ENCODE measurements at regions of chr12 and their contacts with region 1.

Region 1: DNA sequence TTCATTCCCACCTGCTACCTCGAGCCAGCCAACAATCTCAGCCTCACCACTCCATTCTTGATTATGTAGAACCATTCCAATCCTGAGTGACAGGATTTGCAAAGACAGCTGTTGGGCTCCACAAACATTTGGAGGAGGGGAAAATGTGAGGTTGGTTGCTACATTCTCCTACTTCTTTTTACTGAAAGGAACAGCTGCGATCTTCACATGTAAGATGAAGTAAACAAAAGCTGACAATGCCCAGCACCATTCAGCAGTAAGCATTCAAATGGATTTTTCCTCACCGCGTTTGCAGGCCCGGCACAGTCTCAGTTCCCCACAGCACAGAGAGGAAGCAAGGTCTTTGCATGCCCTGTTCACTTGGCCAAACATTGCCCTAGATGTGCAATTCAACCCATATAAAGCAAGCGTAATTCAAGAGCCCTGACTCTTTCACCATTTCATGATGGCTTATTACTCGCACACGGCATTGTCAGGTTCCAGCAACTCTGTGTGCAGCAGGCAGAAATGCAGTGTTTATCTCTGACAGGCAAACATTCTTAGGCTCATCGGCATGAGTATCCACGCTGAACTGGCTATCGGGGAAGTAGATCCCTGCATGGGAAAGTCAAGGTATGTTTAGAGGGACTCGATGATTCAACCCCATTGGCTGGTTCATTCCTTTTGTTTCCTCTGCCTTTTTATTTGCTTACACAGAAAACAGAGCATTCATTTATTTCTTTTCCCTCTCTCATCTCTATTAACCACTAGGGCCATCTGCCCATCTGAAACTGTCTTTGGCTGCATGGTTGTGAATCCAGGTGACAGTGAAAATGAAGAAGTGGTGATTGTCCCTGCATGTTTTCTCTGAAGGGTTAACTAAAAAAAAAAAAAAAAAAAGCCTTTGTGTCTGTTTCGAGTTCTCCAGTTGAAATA is 236.1 kb upstream of the PLEKHG7 start:
- DNase-seq: peak; percentile 92
- H3K4me3 ChIP-seq: peak overlapping the region; percentile 70
- H3K27ac ChIP-seq: peak overlapping the region; percentile 98
- H3K4me1 ChIP-seq: peaks cover 83% of the 10 kb centered on the region
- CTCF ChIP-seq: no peak; the same call in 1 of the 2 replicates

Region 2: DNA sequence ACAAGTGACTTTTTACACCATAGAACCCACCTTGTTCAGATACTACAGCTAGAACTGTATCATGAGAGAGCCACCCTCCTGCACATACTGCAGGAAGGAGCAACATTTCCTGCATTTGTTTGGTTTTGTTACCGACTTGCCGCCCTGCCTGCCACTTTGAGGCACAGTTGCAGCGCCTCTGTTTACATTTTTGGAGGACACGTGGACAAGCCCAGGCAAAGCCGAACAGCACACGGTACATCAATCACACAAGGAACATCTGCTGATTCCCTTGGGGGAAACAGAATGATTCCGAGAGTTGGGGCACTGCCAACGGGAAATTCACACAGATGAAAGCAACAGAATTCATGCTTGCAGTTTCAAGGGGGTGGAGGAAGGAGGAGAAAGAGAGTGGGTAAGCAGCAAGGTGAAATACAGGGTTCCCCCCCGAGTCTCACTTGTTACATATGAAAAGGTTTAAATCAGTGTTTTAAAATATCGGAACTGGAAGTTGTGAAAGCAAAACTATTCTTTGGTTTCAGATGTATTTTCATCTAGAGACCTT is 431.7 kb before region 1 on chr12:
- CTCF ChIA-PET with region 1: no interaction called
- POLR2A ChIA-PET with region 1: no interaction called
- intact Hi-C with region 1: loop called (anchors 5 kb)
- DNase-seq: peak; percentile 88
- H3K4me3 ChIP-seq: peak overlapping the region; percentile 64
- H3K27ac ChIP-seq: peak overlapping the region; percentile 64
- H3K4me1 ChIP-seq: peaks cover 70% of the 10 kb centered on the region
- CTCF ChIP-seq: no peak

Region 3: DNA sequence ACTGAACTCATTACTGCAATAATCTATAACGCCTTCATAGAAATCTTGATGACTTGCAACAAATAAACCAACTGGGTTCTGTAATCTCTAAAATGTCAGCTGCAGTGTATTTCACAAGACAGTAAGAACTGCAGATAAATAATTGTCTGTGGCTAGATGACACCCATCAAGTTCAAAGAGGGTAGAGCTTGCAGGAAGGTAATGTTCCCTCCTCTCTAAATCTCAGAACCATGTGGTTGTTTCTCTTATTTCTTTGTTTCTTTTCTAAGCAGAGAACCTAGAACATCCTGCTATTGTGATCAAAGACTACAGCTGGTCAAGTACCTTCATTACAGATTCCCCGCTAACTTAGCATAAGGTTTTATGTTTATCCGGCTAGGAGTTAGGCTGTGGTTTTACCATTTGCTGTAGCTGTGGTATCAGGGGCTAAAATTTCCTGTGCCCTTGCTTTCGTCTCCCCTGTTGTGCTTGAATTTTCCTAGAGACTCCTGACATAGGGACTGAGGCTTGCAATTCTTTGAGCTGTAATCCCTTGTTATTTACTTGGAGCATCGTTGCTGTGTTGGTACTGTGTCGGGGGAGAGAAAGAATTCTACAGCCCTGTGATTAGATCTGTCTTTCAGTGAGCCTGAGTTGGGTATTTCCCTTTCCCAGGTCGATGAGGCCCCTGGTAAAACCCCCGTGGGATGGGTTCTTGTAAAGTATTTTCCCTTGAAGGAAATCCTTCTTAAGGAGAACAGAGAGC is 67.9 kb before region 1 on chr12:
- CTCF ChIA-PET with region 1: no interaction called
- POLR2A ChIA-PET with region 1: interaction called, 19 read pairs
- intact Hi-C with region 1: loop called (anchors 2 kb)
- DNase-seq: peak; percentile 13
- H3K4me3 ChIP-seq: no peak overlapping the region
- H3K27ac ChIP-seq: no peak overlapping the region
- H3K4me1 ChIP-seq: peaks cover 55% of the 10 kb centered on the region
- CTCF ChIP-seq: no peak

Region 4: GRCh38 chr12:92445253-92446082 is 21.2 kb before region 1 on chr12:
- CTCF ChIA-PET with region 1: interaction called, 10 read pairs
- POLR2A ChIA-PET with region 1: interaction called, 238 read pairs
- intact Hi-C with region 1: loop called (anchors 1 kb)
- DNase-seq: peak; percentile 98
- H3K4me3 ChIP-seq: peak overlapping the region; percentile 58
- H3K27ac ChIP-seq: peak overlapping the region; percentile 99
- H3K4me1 ChIP-seq: peaks cover 65% of the 10 kb centered on the region
- CTCF ChIP-seq: no peak

Region 5: GRCh38 chr12:92478692-92479091 is 12.0 kb after region 1 on chr12:
- CTCF ChIA-PET with region 1: no interaction called
- POLR2A ChIA-PET with region 1: interaction called, 14 read pairs
- intact Hi-C with region 1: no loop called
- DNase-seq: no peak
- H3K4me3 ChIP-seq: no peak overlapping the region
- H3K27ac ChIP-seq: no peak overlapping the region
- H3K4me1 ChIP-seq: peaks cover 35% of the 10 kb centered on the region
- CTCF ChIP-seq: no peak

Measured in OCI-LY7 (cell line).